A549 (cell line): ENCODE measurements at regions of chr17 and their contacts with region 1.

Region 1: GRCh38 chr17:83079352-83079747 is at the start of gene METRNL:
- DNase-seq: peak; percentile 66 to 77
- ATAC-seq: peak; percentile 46 to 55
- H3K4me3 ChIP-seq: peak within 1 kb of the TSS; percentile 77
- H3K27ac ChIP-seq: peak within 1 kb of the TSS; percentile 67 to 91
- H3K4me1 ChIP-seq: peaks cover 24% of the 10 kb centered on the region
- CTCF ChIP-seq: no peak
- EP300 ChIP-seq: no peak
- POLR2A ChIP-seq: peak; percentile 86
- RAD21 ChIP-seq: no peak
- polyA plus RNA-seq, gene METRNL: 1.4 and 1.7 TPM in 2 replicates

Region 2: DNA sequence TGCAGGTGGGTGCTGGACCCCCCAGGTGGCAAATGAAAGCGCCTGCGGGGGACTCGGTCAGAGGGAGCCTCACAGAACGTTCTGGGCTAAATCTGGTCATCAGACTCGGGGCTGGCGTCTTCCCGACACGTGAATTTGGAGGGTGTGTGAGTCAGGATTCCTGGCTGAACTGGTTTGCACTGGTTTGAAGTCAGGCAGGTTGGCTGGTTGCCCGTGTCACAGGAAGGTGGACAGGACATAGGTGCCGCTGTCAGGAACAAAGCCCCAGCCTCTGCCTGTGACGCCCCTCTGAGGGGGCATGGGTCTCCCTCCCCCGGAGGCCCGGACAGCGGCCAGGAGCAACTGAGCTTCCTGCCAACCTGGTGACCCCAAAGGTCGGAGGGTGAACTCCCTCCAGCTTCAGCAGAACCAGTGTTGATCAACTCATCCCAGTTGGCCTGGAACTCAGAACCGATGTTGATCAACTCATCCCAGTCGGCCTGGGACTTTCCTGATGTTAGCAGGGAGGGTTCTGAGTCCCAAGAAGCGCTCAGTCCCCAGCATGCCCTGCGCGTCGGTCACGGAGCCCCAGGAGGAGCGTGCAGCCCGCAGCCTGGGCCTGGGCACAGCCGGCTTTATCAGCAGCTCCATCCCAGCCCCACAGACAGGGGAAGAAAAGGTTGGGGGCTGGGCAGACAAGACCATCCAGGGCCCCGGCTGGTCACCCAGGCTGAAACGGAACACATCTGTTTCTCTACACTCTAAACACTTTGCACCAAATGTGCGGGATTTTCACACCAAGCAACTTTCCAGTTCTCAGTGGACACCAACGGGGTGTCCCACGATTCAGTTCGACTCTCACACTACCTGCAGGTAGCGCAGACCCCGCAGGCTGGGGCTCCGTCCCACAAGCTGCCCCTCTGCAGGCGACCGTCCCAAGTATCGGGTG is 14.4 kb before region 1 on chr17:
- CTCF ChIA-PET with region 1: interaction called, 31 read pairs
- POLR2A ChIA-PET with region 1: interaction called, 3 read pairs
- DNase-seq: no peak
- ATAC-seq: no peak
- H3K4me3 ChIP-seq: no peak overlapping the region
- H3K27ac ChIP-seq: no peak overlapping the region
- H3K4me1 ChIP-seq: no peaks in the 10 kb centered on the region
- CTCF ChIP-seq: no peak
- EP300 ChIP-seq: no peak
- POLR2A ChIP-seq: no peak
- RAD21 ChIP-seq: no peak

Region 3: DNA sequence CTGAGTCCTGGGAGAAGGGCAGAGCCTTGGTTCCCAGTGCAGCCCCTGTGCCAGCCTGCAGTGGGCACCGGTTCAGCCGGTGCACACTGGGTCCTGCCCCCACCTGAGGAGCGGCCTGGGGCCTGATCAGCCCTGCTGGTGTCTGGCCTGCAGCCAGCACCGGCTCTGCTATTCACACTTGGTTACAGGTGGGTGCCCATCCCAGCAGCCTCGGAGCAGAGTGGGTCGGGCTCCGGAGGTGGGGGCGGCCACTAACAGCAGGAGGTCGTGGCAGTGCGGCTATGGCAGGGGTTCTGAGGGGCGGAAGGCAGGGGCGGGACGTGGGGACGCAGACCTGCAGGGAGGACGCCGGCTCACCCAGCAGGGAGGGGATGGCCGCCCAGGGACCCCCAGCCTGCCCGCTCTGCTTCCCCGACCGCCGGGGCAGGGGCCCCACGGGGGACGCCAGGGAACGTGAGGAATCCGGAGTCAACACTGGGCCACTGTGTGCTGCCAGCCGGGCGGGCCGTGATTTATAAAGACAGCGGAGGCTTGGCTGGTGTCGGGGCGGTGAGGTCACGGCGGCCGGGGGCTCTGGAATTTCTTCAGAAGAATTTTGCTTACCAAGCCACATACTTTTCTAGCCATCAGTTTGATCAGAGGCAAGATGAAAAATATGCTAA is 20.4 kb after region 1 on chr17:
- CTCF ChIA-PET with region 1: interaction called, 15 read pairs
- POLR2A ChIA-PET with region 1: interaction called, 6 read pairs
- DNase-seq: no peak
- ATAC-seq: peak; percentile 26 to 38; a peak in 3 of 6 replicates
- H3K4me3 ChIP-seq: no peak overlapping the region
- H3K27ac ChIP-seq: no peak overlapping the region
- H3K4me1 ChIP-seq: peaks cover 10% of the 10 kb centered on the region
- CTCF ChIP-seq: no peak
- EP300 ChIP-seq: no peak
- POLR2A ChIP-seq: no peak
- RAD21 ChIP-seq: no peak

Region 4: GRCh38 chr17:83109793-83110645 is 30.7 kb after region 1 on chr17:
- CTCF ChIA-PET with region 1: interaction called, 3 read pairs
- POLR2A ChIA-PET with region 1: interaction called, 14 read pairs
- DNase-seq: peak; percentile 93 to 94
- ATAC-seq: peak; percentile 86 to 94
- H3K4me3 ChIP-seq: peak overlapping the region; percentile 39
- H3K27ac ChIP-seq: peak overlapping the region; percentile 88 to 92
- H3K4me1 ChIP-seq: peaks cover 21% of the 10 kb centered on the region
- CTCF ChIP-seq: no peak
- EP300 ChIP-seq: peak in 1 of 2 experiments; percentile 12; a peak in 1 of 5 replicates
- POLR2A ChIP-seq: peak; percentile 32
- RAD21 ChIP-seq: peak in 1 of 2 experiments; percentile 17; a peak in 3 of 5 replicates

Region 5: GRCh38 chr17:83189044-83190003 is 110.0 kb after region 1 on chr17:
- CTCF ChIA-PET with region 1: no interaction called
- POLR2A ChIA-PET with region 1: no interaction called
- DNase-seq: no peak
- ATAC-seq: no peak; a peak in 1 of 6 replicates
- H3K4me3 ChIP-seq: no peak overlapping the region
- H3K27ac ChIP-seq: no peak overlapping the region
- H3K4me1 ChIP-seq: no peaks in the 10 kb centered on the region
- CTCF ChIP-seq: no peak
- EP300 ChIP-seq: no peak
- POLR2A ChIP-seq: no peak
- RAD21 ChIP-seq: no peak